Esophagus muscularis mucosa (tissue), 4 donors: ENCODE measurements at regions of chr6 and their contacts with region 1.

Region 1: GRCh38 chr6:30742316-30743098 is at the start of gene FLOT1:
- DNase-seq: peak; percentile 99
- H3K4me3 ChIP-seq: peak within 1 kb of the TSS; percentile 69 to 91 (median 84)
- H3K27ac ChIP-seq: peak within 1 kb of the TSS; percentile 90 to 99 (median 90)
- H3K4me1 ChIP-seq: peaks cover 40 to 66% (median 54%) of the 10 kb centered on the region in 4 donors
- H3K27me3 ChIP-seq: no peaks in the 10 kb centered on the region
- CTCF ChIP-seq: no peak
- EP300 ChIP-seq: no peak
- POLR2A ChIP-seq: peak; percentile 86
- total RNA-seq, gene FLOT1: 115 to 214 (median 166) TPM

Region 2: GRCh38 chr6:30672445-30673253 is 69.9 kb before region 1 on chr6 and contains the start of gene DHX16:
- intact Hi-C with region 1: no loop called
- DNase-seq: peak; percentile 98
- H3K4me3 ChIP-seq: peak within 1 kb of the TSS; percentile 81 to 95 (median 94)
- H3K27ac ChIP-seq: peak within 1 kb of the TSS; percentile 80 to 93 (median 84)
- H3K4me1 ChIP-seq: peaks cover 16 to 32% (median 23%) of the 10 kb centered on the region in 4 donors
- H3K27me3 ChIP-seq: no peaks in the 10 kb centered on the region
- CTCF ChIP-seq: peak; percentile 86 to 96 (median 94)
- EP300 ChIP-seq: no peak
- POLR2A ChIP-seq: no peak
- total RNA-seq, gene DHX16: 20.3 to 41.1 (median 31.1) TPM

Region 3: GRCh38 chr6:30821862-30822782 is 79.6 kb after region 1 on chr6:
- intact Hi-C with region 1: loop called (anchors 5 kb)
- DNase-seq: no peak
- H3K4me3 ChIP-seq: no peak overlapping the region
- H3K27ac ChIP-seq: peak overlapping the region in 2 of 4 donors; percentile 0 to 37
- H3K4me1 ChIP-seq: peaks cover 12 to 35% (median 30%) of the 10 kb centered on the region in 4 donors
- H3K27me3 ChIP-seq: no peaks in the 10 kb centered on the region
- CTCF ChIP-seq: peak; percentile 32 to 52 (median 33)
- EP300 ChIP-seq: no peak
- POLR2A ChIP-seq: no peak

Region 4: GRCh38 chr6:30955367-30956042 is 213.0 kb after region 1 on chr6:
- intact Hi-C with region 1: no loop called
- DNase-seq: no peak
- H3K4me3 ChIP-seq: peak overlapping the region; percentile 54 to 62 (median 55)
- H3K27ac ChIP-seq: peak overlapping the region in 2 of 4 donors; percentile 17 to 24
- H3K4me1 ChIP-seq: peaks cover 10 to 13% (median 13%) of the 10 kb centered on the region in 4 donors
- H3K27me3 ChIP-seq: peaks cover 0 to 44% (median 0%) of the 10 kb centered on the region in 4 donors
- CTCF ChIP-seq: no peak
- EP300 ChIP-seq: no peak
- POLR2A ChIP-seq: no peak

Region 5: DNA sequence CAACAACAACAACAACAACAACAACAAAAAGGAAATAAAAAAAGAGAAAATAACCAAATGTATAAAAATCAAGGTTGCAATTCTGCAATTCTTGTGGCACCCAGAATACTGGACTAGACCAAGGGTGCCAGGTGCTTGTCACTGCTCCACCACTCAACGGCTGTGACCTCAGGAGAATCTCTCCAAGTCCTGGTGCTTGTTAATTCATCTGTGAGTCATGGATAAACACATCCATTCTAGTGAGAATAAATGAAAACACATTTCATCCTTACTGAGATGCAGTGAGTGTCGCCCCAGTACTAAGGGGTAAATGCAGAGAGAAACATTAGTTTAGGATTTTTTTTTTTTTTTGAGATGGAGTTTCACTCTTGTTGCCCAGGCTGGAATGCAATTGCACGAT is 497.3 kb after region 1 on chr6:
- intact Hi-C with region 1: no loop called
- DNase-seq: no peak
- H3K4me3 ChIP-seq: no peak overlapping the region
- H3K27ac ChIP-seq: no peak overlapping the region
- H3K4me1 ChIP-seq: no peaks in the 10 kb centered on the region
- H3K27me3 ChIP-seq: no peaks in the 10 kb centered on the region
- CTCF ChIP-seq: no peak
- EP300 ChIP-seq: no peak
- POLR2A ChIP-seq: no peak